Activated naive CD4-positive, alpha-beta T cell treated with anti-CD3 and anti-CD28 coated beads for 36 hours (primary cell): ENCODE measurements at regions of chr19 and their contacts with region 1.

Region 1: DNA sequence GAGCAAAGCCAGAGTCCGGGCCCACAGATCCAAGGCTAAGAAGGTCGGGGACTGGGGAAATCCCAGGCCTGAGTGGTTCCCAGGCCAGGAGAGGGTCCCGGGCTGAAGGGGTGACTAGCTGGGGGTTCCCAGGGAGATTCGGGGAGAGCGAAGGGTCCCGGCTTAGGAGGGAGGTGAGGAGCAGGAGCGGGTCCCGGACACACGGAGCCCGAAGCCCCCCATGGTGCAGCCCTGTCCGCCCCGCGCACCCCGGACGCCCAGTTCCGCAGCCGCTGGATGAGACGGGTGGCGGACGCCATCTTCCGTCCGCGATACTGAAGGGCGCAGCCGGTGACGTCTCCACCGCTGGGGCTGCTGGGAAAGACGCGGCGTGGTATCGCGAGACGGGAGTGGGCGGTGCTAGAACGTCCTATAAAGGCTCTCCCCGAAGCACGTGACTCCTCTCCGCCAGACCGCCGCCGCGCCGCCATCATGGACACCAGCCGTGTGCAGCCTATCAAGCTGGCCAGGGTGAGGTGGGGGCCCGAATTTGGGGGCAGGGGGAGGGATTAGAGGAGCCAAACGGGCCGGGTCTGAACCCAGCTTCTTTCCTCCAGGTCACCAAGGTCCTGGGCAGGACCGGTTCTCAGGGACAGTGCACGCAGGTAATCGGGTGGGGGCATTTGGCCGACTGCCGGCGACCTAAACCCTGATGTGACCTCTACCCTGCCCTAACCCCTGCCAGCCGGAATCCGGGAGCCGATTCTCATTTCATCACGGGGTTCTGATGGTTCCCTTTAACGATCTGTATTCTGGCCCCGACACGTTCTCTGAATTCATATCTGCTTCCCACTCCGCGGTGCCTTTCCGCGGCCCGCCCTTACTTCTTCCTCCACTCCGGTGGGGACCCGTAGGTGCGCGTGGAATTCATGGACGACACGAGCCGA is at the starts of genes NDUFA7 and RPS28:
- DNase-seq: peak; percentile 99
- H3K4me3 Mint-ChIP-seq: peak within 1 kb of the TSS; percentile 100
- H3K27ac Mint-ChIP-seq: peak within 1 kb of the TSS; percentile 95
- H3K4me1 Mint-ChIP-seq: peaks cover 30% of the 10 kb centered on the region
- H3K27me3 Mint-ChIP-seq: no peaks in the 10 kb centered on the region
- total RNA-seq, gene NDUFA7: 95.9 to 104 TPM
- total RNA-seq, gene RPS28: 2,814 to 3,007 TPM

Region 2: DNA sequence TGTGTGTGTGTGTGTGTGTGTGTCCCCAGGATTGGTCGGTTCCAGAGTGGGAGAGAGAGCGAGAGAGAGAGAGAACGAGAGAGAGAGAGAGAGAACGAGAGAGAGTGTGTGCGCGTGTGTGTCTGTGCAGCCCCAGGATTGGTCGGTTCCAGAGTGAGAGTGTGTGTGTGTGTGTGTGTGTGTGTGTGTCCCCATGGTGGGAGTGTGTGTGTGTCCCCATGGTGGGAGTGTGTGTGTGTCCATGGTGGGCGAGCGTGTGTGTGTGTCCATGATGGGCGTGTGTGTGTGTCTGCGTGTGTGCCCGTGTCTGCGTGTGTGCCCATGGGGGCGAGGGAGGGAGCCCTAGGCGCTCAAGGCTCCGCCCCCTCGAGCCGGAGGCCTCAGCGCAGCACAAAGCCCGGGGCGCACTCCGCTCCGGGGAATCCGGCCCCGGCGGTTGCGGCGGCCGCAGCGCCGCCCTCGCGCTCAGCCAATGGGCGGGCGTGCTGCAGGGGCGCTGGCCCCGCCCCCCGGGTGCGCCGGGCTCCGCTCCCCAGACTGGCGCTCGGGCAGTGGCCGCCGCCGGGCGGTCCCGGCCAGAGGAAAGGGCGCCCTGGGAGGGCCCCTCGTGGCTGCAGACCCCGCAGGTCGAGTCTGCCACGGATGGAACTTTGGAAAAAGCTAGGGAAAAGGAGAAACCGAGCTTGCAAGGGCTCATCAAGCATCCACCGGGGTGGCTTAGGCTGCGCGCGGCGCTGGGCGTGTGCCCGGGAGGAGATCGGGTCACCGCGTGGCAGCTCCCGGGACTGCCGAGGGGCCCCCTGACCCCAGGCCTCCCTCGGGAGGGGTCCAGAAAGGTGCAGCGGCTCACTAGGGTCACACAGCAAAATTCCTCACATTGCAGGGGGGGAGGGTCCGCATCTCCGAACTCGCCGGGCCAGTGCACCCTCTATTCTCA is 1123.3 kb before region 1 on chr19:
- CTCF ChIA-PET with region 1: no interaction called
- intact Hi-C with region 1: loop called (anchors 5 kb)
- DNase-seq: peak; percentile 90
- H3K4me3 Mint-ChIP-seq: peak overlapping the region; percentile 77
- H3K27ac Mint-ChIP-seq: peak overlapping the region; percentile 84
- H3K4me1 Mint-ChIP-seq: peaks cover 7% of the 10 kb centered on the region
- H3K27me3 Mint-ChIP-seq: peaks cover 5% of the 10 kb centered on the region

Region 3: GRCh38 chr19:7943444-7944176 is 377.7 kb before region 1 on chr19 and contains the start of gene TIMM44:
- CTCF ChIA-PET with region 1: no interaction called
- intact Hi-C with region 1: loop called (anchors 1 kb)
- DNase-seq: peak; percentile 100
- H3K4me3 Mint-ChIP-seq: peak within 1 kb of the TSS; percentile 95
- H3K27ac Mint-ChIP-seq: peak within 1 kb of the TSS; percentile 94
- H3K4me1 Mint-ChIP-seq: peaks cover 41% of the 10 kb centered on the region
- H3K27me3 Mint-ChIP-seq: no peaks in the 10 kb centered on the region
- total RNA-seq, gene TIMM44: 88.8 to 88.9 TPM

Region 4: DNA sequence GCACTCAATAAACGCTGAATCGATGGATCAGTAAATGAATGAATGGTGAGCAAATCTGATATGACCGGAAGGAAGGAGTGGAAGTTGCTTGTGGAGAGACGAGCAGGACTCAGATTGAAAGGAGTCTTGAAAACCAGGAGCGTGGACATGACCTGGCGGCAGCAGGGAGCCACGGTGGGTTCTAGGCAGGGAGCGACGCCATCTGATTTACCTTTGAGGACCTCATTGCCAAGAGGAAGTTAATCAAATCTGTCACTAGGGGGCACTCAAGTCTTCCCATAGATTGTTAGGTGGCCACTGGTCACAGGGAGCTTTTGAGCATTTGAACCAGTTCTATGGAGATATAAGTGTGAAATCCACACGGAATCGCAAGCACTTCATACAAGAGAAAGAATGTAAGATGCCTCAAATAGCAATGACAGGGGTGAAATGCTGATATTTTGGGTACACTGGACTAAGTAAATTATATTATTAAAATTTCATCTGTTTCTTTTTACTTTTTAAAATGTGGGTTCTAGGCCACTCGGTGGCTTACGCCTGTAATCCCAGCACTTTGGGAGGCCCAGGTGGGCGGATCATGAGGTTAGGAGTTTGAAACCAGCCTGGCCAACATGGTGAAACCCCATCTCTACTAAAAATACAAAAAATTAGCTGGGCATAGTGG is 162.8 kb before region 1 on chr19:
- CTCF ChIA-PET with region 1: no interaction called
- intact Hi-C with region 1: loop called (anchors 5 kb)
- DNase-seq: peak; percentile 63
- H3K4me3 Mint-ChIP-seq: no peak overlapping the region
- H3K27ac Mint-ChIP-seq: no peak overlapping the region
- H3K4me1 Mint-ChIP-seq: peaks cover 1% of the 10 kb centered on the region
- H3K27me3 Mint-ChIP-seq: peaks cover 13% of the 10 kb centered on the region

Region 5: GRCh38 chr19:8307965-8308866 is 13.1 kb before region 1 on chr19 and contains the start of gene CD320:
- CTCF ChIA-PET with region 1: no interaction called
- intact Hi-C with region 1: loop called (anchors 1 kb)
- DNase-seq: peak; percentile 86
- H3K4me3 Mint-ChIP-seq: peak within 1 kb of the TSS; percentile 94
- H3K27ac Mint-ChIP-seq: peak within 1 kb of the TSS; percentile 90
- H3K4me1 Mint-ChIP-seq: peaks cover 39% of the 10 kb centered on the region
- H3K27me3 Mint-ChIP-seq: no peaks in the 10 kb centered on the region
- total RNA-seq, gene CD320: 37.6 to 40.1 TPM

Region 6: DNA sequence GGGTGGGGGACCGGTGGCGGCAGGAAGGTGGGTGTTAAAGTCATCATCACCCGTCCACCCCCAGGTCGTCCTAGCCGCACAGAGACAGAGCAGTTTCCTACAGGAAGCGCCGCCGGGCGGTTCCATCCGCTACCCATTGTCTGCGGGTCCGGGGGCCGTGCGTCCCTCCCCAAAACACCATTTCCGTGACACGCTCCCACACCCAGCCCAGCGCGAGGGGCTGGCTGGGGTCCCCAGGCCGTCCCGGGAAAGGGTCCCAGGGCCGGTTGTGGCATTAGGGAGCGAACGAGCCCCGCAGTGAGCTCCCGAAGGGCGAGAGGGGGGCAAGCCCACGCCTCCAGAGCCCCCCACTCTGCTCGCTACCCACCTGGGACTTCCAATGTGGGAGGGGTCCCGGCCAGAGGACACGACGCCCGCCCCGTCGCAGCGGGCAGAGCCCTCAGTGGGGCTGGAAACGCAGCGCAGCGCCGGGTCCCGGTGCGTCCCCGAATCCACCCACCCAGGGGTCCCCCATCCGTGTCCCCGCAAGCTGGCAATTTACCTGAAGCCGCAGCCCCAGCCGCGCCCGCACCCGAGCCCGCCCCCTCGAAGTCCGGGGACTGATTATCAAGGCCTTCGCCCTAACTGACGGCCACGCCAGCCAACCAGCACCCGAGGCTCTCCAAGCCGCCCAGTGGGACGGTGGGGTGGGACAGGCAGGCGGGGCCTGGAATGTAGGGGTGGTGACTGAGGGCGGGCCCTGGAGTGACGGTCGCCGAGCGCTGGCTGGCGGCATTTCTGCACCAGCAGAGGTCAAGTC is 21.6 kb after region 1 on chr19 and contains the start of gene KANK3:
- CTCF ChIA-PET with region 1: no interaction called
- intact Hi-C with region 1: loop called (anchors 1 kb)
- DNase-seq: peak; percentile 96
- H3K4me3 Mint-ChIP-seq: peak within 1 kb of the TSS; percentile 73
- H3K27ac Mint-ChIP-seq: no peak within 1 kb of the TSS
- H3K4me1 Mint-ChIP-seq: peaks cover 4% of the 10 kb centered on the region
- H3K27me3 Mint-ChIP-seq: peaks cover 7% of the 10 kb centered on the region
- total RNA-seq, gene KANK3: 0.17 to 0.36 TPM

Region 7: GRCh38 chr19:8423817-8424223 is 102.5 kb after region 1 on chr19:
- CTCF ChIA-PET with region 1: no interaction called
- intact Hi-C with region 1: no loop called
- DNase-seq: no peak
- H3K4me3 Mint-ChIP-seq: no peak overlapping the region
- H3K27ac Mint-ChIP-seq: no peak overlapping the region
- H3K4me1 Mint-ChIP-seq: no peaks in the 10 kb centered on the region
- H3K27me3 Mint-ChIP-seq: no peaks in the 10 kb centered on the region

Region 8: DNA sequence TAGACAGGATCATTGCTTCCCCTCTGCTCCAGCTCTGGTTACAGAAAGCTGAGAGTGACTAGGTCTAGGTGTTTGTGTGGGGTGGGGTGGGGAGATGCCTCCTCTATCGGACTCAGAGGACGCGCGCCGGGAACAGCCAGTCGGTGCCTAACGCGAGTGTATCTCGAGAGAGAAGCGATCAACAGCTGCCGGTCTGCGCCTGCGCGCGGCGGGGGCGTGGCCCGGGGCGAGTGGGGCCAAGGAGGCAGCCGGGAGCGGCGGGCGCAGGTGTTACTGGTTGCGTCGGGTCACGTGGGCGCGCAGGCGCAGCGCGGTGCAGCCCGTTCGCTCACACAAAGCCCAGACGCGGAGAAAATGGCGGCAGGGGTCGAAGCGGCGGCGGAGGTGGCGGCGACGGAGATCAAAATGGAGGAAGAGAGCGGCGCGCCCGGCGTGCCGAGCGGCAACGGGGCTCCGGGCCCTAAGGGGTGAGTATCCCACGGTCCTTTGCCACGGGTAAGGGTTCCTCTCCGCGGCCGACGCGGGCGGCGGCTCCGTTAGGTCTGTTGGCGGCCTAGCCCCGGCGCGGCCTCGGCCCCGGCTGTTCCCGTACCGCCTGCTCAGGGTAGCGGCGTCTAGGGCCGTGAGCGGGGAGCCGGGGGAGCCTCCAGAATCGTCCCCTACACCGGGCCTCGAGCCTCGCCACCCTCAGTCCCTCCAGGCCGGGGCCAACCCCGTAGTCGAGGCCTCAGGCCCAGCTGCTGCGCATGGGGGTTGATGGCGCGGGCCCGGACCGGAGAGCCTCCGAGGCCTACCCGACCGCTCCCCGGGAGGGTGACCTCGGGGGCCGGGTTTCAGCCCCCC is 123.5 kb after region 1 on chr19 and contains the start of gene HNRNPM:
- CTCF ChIA-PET with region 1: no interaction called
- intact Hi-C with region 1: loop called (anchors 1 kb)
- DNase-seq: peak; percentile 100
- H3K4me3 Mint-ChIP-seq: peak within 1 kb of the TSS; percentile 95
- H3K27ac Mint-ChIP-seq: peak within 1 kb of the TSS; percentile 94
- H3K4me1 Mint-ChIP-seq: peaks cover 38% of the 10 kb centered on the region
- H3K27me3 Mint-ChIP-seq: no peaks in the 10 kb centered on the region
- total RNA-seq, gene HNRNPM: 151 to 169 TPM